ENCODE measurements at regions of chr1 and their contacts with region 1.

Region 1: DNA sequence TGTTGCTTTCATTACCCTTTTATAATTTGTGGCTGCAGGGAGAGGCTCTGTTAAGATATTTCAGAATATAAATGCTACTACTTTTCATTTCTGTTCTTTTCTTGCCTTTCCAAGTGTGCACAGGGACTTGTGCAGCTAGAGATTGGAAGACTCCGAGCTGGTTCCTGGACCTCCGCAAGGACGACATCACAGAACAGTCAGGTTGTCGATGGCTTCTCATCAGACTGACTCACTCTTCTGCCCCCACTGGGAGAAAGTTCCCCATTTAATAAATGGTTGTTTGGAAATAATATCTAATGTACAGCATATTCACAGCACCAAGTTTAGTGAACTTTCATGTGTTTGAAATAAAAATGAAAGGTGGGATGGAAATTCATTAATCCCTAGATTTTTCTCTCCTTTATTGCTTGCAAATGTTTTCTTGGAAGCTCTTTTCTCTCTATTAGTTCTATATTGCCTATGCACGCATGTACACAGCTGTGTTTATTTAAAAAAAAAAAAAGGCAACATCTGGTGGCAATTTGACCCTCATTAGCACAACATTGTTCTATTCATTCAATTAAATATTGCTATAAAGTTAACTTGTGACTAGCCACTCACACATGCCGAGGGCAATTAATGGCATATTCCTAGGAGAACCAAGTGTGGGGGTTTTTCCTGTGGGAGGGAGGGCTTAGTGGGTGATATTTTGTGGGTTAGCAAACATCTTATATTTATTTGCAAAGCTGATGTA is 77.5 kb upstream of the L1TD1 start:
- DNase-seq: no peak
- H3K27ac ChIP-seq: no peak overlapping the region
- CTCF ChIP-seq: no peak

Region 2: DNA sequence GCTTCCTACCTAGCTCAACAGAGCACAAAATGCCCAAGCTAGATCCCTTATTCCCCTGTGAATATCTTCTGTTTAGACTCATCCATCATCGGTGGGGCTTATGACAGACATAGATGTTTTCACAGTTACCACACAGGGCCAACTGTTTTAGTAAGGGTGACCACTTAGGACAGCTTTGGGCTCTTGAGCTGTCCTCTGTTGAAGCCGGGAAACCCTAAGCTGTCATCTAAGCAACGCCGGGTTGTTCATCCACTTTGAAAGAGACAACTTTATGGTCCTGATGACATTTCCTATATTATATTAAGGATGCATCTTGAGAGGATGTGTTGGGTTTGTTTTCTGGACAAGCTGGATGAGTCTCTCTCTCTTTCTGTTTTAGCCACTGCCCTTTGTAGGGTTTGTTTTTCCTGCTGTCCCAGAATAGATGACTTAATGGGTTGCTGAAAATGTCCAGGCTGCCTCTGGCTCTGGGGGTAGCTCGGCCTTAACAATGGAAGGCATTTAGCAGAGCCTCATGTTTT is 1975.7 kb after region 1 on chr1:
- CTCF ChIA-PET with region 1: interaction called, 10 read pairs
- POLR2A ChIA-PET with region 1: no interaction called
- DNase-seq: no peak
- H3K27ac ChIP-seq: no peak overlapping the region
- CTCF ChIP-seq: no peak